IMR-90 (cell line): ENCODE measurements at regions of chr9 and their contacts with region 1.

Region 1: GRCh38 chr9:112061152-112061740 is 113.9 kb downstream of the SUSD1 start:
- DNase-seq: peak; percentile 99
- ATAC-seq: peak; percentile 73
- H3K4me3 ChIP-seq: no peak overlapping the region
- H3K27ac ChIP-seq: peak overlapping the region; percentile 97
- H3K4me1 ChIP-seq: peaks cover 26% of the 10 kb centered on the region
- H3K27me3 ChIP-seq: no peaks in the 10 kb centered on the region
- CTCF ChIP-seq: no peak
- POLR2A ChIP-seq: peak; percentile 48
- RAD21 ChIP-seq: peak; percentile 22

Region 2: GRCh38 chr9:111902396-111903147 is 158.7 kb before region 1 on chr9:
- CTCF ChIA-PET with region 1: no interaction called
- POLR2A ChIA-PET with region 1: no interaction called
- dilution Hi-C with region 1: no loop called
- in situ Hi-C with region 1: loop called (anchors 5 kb)
- intact Hi-C with region 1: no loop called
- DNase-seq: peak; percentile 70
- ATAC-seq: peak; percentile 10; the same call in 1 of the 2 replicates
- H3K4me3 ChIP-seq: peak overlapping the region; percentile 98; the same call in 1 of the 2 replicates
- H3K27ac ChIP-seq: peak overlapping the region; percentile 55
- H3K4me1 ChIP-seq: peaks cover 29% of the 10 kb centered on the region
- H3K27me3 ChIP-seq: no peaks in the 10 kb centered on the region
- CTCF ChIP-seq: no peak
- POLR2A ChIP-seq: no peak
- RAD21 ChIP-seq: no peak

Region 3: GRCh38 chr9:112174218-112174964 is 113.1 kb after region 1 on chr9:
- CTCF ChIA-PET with region 1: no interaction called
- POLR2A ChIA-PET with region 1: no interaction called
- dilution Hi-C with region 1: no loop called
- in situ Hi-C with region 1: no loop called
- intact Hi-C with region 1: no loop called
- DNase-seq: peak; percentile 16
- ATAC-seq: peak; percentile 90
- H3K4me3 ChIP-seq: peak overlapping the region; percentile 48
- H3K27ac ChIP-seq: no peak overlapping the region
- H3K4me1 ChIP-seq: no peaks in the 10 kb centered on the region
- H3K27me3 ChIP-seq: peaks cover 4% of the 10 kb centered on the region; the same call in 1 of the 2 replicates
- CTCF ChIP-seq: no peak
- POLR2A ChIP-seq: no peak
- RAD21 ChIP-seq: no peak

Region 4: DNA sequence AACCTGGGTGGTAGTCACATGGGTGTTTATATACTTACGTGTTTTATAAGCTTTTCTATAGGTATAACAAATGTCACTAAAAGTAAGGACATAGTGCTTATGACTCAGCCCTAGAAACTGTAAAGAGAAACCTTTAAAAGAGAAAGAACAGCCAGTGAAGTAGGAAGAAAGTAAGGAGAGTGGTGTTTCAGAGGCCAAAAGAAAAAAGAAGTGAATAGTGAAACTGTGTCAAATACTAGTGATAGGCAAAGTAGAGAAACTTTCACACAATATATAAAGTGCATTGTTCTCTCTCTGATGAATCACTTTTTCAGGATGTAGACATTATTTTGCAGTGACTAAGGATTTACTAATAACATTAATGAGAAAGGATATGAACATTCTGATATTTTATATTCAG is 188.0 kb after region 1 on chr9:
- CTCF ChIA-PET with region 1: no interaction called
- POLR2A ChIA-PET with region 1: no interaction called
- dilution Hi-C with region 1: no loop called
- in situ Hi-C with region 1: no loop called
- intact Hi-C with region 1: no loop called
- DNase-seq: peak; percentile 39
- ATAC-seq: peak; percentile 59
- H3K4me3 ChIP-seq: no peak overlapping the region
- H3K27ac ChIP-seq: no peak overlapping the region; the same call in 1 of the 2 replicates
- H3K4me1 ChIP-seq: peaks cover 3% of the 10 kb centered on the region; the same call in 1 of the 2 replicates
- H3K27me3 ChIP-seq: no peaks in the 10 kb centered on the region
- CTCF ChIP-seq: no peak
- POLR2A ChIP-seq: no peak
- RAD21 ChIP-seq: no peak

Region 5: GRCh38 chr9:112379177-112380101 is 318.2 kb after region 1 on chr9:
- CTCF ChIA-PET with region 1: no interaction called
- POLR2A ChIA-PET with region 1: no interaction called
- dilution Hi-C with region 1: no loop called
- in situ Hi-C with region 1: no loop called
- intact Hi-C with region 1: no loop called
- DNase-seq: peak; percentile 97
- ATAC-seq: peak; percentile 94
- H3K4me3 ChIP-seq: peak overlapping the region; percentile 75
- H3K27ac ChIP-seq: peak overlapping the region; percentile 94
- H3K4me1 ChIP-seq: peaks cover 3% of the 10 kb centered on the region; the same call in 1 of the 2 replicates
- H3K27me3 ChIP-seq: no peaks in the 10 kb centered on the region
- CTCF ChIP-seq: 0 out of 2 replicates have a peak, but pooled peaks have one; percentile 6
- POLR2A ChIP-seq: peak; percentile 96
- RAD21 ChIP-seq: 0 out of 2 replicates have a peak, but pooled peaks have one; percentile 2

Region 6: GRCh38 chr9:112689161-112689740 is 628.0 kb after region 1 on chr9:
- CTCF ChIA-PET with region 1: no interaction called
- POLR2A ChIA-PET with region 1: no interaction called
- dilution Hi-C with region 1: no loop called
- in situ Hi-C with region 1: no loop called
- intact Hi-C with region 1: no loop called
- DNase-seq: no peak
- ATAC-seq: no peak
- H3K4me3 ChIP-seq: no peak overlapping the region
- H3K27ac ChIP-seq: no peak overlapping the region
- H3K4me1 ChIP-seq: peaks cover 1% of the 10 kb centered on the region; the same call in 1 of the 2 replicates
- H3K27me3 ChIP-seq: no peaks in the 10 kb centered on the region
- CTCF ChIP-seq: no peak
- POLR2A ChIP-seq: no peak
- RAD21 ChIP-seq: no peak